ENCODE measurements at regions of chr3 and their contacts with region 1.

Region 1: DNA sequence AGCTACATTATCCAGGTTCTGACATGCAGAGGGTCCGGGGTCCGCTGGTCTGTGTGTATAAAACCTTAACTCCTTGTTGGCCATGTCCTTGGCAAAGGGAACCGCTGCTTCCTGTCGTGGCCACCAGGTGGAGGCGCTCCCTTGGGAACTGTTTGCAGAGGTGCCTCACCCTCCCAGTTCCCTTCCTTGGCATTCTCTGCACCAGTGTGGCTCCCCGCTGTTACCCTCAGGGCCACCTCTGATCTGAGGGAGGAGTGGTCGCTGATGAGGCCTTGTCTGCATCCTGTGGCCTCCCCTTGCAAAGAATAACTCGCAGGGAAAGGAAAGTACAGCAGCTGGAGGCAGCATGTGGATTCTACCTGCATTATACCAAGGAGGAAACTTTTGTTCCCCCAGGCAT is 89.6 kb downstream of the CHRD start:
- H3K4me3 Mint-ChIP-seq: no peak overlapping the region
- H3K27ac Mint-ChIP-seq: no peak overlapping the region
- H3K4me1 Mint-ChIP-seq: peaks cover 65% of the 10 kb centered on the region
- H3K27me3 Mint-ChIP-seq: peaks cover 11% of the 10 kb centered on the region

Region 2: GRCh38 chr3:184298759-184299496 is 170.5 kb before region 1 on chr3 and contains the start of gene PSMD2:
- intact Hi-C with region 1: no loop called
- H3K4me3 Mint-ChIP-seq: peak within 1 kb of the TSS; percentile 98
- H3K27ac Mint-ChIP-seq: peak within 1 kb of the TSS; percentile 91
- H3K4me1 Mint-ChIP-seq: peaks cover 31% of the 10 kb centered on the region
- H3K27me3 Mint-ChIP-seq: peaks cover 3% of the 10 kb centered on the region

Region 3: GRCh38 chr3:184371570-184372018 is 97.8 kb before region 1 on chr3:
- intact Hi-C with region 1: loop called (anchors 5 kb)
- H3K4me3 Mint-ChIP-seq: no peak overlapping the region
- H3K27ac Mint-ChIP-seq: no peak overlapping the region
- H3K4me1 Mint-ChIP-seq: peaks cover 13% of the 10 kb centered on the region
- H3K27me3 Mint-ChIP-seq: peaks cover 38% of the 10 kb centered on the region

Region 4: GRCh38 chr3:184417619-184418327 is 51.6 kb before region 1 on chr3:
- intact Hi-C with region 1: loop called (anchors 1 kb)
- H3K4me3 Mint-ChIP-seq: no peak overlapping the region
- H3K27ac Mint-ChIP-seq: no peak overlapping the region
- H3K4me1 Mint-ChIP-seq: no peaks in the 10 kb centered on the region
- H3K27me3 Mint-ChIP-seq: peaks cover 1% of the 10 kb centered on the region

Region 5: DNA sequence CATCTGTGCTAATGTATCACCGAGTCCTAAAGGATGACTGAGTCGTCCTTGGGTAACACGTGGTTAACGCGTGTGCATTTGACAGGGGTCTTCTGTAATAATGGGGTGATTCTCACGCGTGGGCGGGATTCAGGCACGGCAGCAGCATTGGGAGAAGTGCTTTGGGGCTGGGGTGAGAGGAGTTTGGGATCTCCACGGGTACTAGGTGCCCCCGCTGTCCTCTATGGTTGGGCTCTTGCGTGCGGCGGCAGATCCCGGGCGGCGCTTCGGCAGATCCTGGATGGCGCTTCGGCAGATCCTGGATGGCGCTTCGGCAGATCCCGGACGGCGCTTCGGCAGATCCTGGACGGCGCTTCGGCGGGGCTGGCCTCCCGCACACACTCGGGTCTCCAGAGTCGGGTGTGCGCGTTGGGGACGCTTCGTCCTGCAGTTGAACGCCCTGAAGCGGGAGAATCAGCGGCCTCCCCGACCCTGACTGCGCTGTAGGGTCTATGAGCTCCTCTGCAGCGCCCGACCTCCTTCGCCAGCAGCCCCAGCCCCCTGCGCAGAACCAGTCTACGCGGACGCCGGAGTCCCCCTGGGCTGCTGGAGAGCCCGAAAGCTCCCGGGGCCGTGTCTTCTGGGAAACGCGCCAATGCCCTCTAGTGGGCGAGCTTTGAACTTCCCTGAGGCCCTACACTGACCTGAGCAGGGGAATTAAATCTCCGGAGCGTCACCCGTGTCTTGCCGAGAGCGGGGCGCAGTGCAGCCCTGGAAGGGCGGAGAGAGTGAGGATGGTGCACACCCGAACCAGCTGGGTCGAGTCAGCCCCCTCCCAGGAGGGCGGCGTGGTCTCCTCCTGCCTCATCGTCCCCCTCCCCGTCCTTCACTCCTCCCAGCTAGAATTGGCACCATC is 44.1 kb after region 1 on chr3:
- intact Hi-C with region 1: loop called (anchors 2 kb)
- H3K4me3 Mint-ChIP-seq: peak overlapping the region; percentile 76
- H3K27ac Mint-ChIP-seq: peak overlapping the region; percentile 84
- H3K4me1 Mint-ChIP-seq: peaks cover 39% of the 10 kb centered on the region
- H3K27me3 Mint-ChIP-seq: peaks cover 21% of the 10 kb centered on the region

Region 6: GRCh38 chr3:184523825-184524615 is 54.6 kb after region 1 on chr3:
- intact Hi-C with region 1: no loop called
- H3K4me3 Mint-ChIP-seq: no peak overlapping the region
- H3K27ac Mint-ChIP-seq: peak overlapping the region; percentile 99
- H3K4me1 Mint-ChIP-seq: peaks cover 34% of the 10 kb centered on the region
- H3K27me3 Mint-ChIP-seq: peaks cover 11% of the 10 kb centered on the region

Measured in dendritic cell treated with granulocyte-macrophage colony-stimulating factor and Interleukin-4, amounts not matched to agents 40 ng/mL and 50 ng/mL, for 4 days (primary cell).